Caco-2 (cell line): ENCODE measurements at regions of chr7 and their contacts with region 1.

Region 1: DNA sequence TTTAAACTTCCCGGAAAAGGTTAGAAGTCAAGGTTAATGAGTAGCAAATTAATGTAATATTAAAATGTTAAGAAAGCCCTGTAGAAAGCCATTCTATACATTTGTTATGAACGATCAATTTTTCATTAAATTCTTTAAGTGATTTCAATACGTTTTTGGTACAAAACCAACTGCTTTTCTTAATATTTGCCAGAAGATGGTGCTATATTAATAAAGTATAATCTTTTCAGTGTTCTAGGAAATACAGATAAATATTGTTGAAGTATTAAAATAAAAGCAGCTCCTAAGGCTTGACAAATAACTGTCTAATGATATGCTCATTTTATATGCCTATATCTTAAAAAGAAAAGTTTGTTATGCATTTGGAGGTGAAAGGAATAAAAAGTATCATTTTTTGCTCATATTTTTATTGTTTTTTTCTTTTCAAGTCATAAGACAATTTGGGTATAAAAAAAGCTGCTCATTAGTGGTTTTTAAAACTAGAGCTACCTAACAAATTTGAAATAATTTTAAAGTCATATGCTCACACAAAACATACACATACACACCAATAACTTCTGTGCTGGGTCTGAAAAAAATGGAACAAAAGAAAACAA is 130.3 kb upstream of the POT1 start:
- DNase-seq: no peak
- H3K4me3 ChIP-seq: no peak overlapping the region
- H3K4me3 Mint-ChIP-seq: no peak overlapping the region
- H3K27ac Mint-ChIP-seq: no peak overlapping the region
- H3K4me1 ChIP-seq: peaks cover 4% of the 10 kb centered on the region; the same call in 1 of the 2 replicates
- H3K4me1 Mint-ChIP-seq: peaks cover 8% of the 10 kb centered on the region
- H3K27me3 ChIP-seq: no peaks in the 10 kb centered on the region
- H3K27me3 Mint-ChIP-seq: peaks cover 2% of the 10 kb centered on the region
- CTCF ChIP-seq: peak; percentile 5 to 41

Region 2: GRCh38 chr7:124497176-124497575 is 562.8 kb before region 1 on chr7:
- CTCF ChIA-PET with region 1: no interaction called
- POLR2A ChIA-PET with region 1: no interaction called
- intact Hi-C with region 1: no loop called
- DNase-seq: no peak
- H3K4me3 ChIP-seq: no peak overlapping the region
- H3K4me3 Mint-ChIP-seq: no peak overlapping the region
- H3K27ac Mint-ChIP-seq: no peak overlapping the region
- H3K4me1 ChIP-seq: no peaks in the 10 kb centered on the region
- H3K4me1 Mint-ChIP-seq: no peaks in the 10 kb centered on the region
- H3K27me3 ChIP-seq: no peaks in the 10 kb centered on the region
- H3K27me3 Mint-ChIP-seq: peaks cover 3% of the 10 kb centered on the region
- CTCF ChIP-seq: no peak

Region 3: DNA sequence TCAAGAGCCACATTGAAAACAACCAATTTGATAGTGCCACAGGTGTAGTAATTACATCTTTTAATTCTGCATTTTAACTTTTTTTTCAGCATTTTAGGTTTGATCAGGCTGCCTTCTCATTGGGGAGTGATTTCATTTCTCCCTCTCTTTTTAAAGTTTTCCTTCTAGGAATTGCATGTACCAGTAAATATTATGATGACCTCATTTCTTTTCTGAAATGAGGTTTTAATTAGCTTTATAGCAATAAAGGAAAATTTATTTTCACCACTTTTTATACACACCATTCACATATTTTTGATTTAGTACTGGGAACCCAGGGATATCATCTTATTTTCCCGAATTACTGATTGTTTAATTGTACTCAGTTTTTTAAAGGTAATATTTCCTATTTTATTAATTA is 52.6 kb before region 1 on chr7:
- CTCF ChIA-PET with region 1: no interaction called
- POLR2A ChIA-PET with region 1: no interaction called
- intact Hi-C with region 1: no loop called
- DNase-seq: no peak
- H3K4me3 ChIP-seq: no peak overlapping the region
- H3K4me3 Mint-ChIP-seq: no peak overlapping the region
- H3K27ac Mint-ChIP-seq: no peak overlapping the region
- H3K4me1 ChIP-seq: no peaks in the 10 kb centered on the region
- H3K4me1 Mint-ChIP-seq: no peaks in the 10 kb centered on the region
- H3K27me3 ChIP-seq: no peaks in the 10 kb centered on the region
- H3K27me3 Mint-ChIP-seq: no peaks in the 10 kb centered on the region
- CTCF ChIP-seq: no peak

Region 4: DNA sequence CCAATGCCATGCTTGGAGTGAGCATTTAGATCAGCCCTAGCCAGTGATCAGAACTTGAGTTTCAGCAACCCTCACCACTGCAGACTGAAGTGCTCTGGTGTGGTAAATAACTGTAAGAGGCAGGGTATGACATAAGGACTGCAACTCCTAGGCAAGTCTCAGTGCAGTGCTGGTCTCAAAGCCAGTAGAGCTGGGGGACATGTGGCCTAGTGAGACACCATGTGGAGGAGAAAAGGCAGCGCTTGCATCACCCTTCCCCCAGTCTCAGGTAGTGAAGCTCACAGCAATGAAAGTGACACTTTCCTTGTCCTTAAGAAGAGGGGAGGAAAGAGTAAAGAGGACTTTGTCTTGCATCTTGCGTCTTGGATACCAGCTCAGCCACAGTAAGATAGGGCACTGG is 256.5 kb after region 1 on chr7:
- CTCF ChIA-PET with region 1: interaction called, 6 read pairs
- POLR2A ChIA-PET with region 1: no interaction called
- intact Hi-C with region 1: loop called (anchors 1 kb)
- DNase-seq: peak; percentile 67 to 75
- H3K4me3 ChIP-seq: no peak overlapping the region
- H3K4me3 Mint-ChIP-seq: no peak overlapping the region
- H3K27ac Mint-ChIP-seq: no peak overlapping the region
- H3K4me1 ChIP-seq: no peaks in the 10 kb centered on the region
- H3K4me1 Mint-ChIP-seq: no peaks in the 10 kb centered on the region
- H3K27me3 ChIP-seq: no peaks in the 10 kb centered on the region
- H3K27me3 Mint-ChIP-seq: peaks cover 5% of the 10 kb centered on the region
- CTCF ChIP-seq: peak; percentile 34 to 60

Region 5: GRCh38 chr7:125670926-125671572 is 611.1 kb after region 1 on chr7:
- CTCF ChIA-PET with region 1: no interaction called
- POLR2A ChIA-PET with region 1: no interaction called
- intact Hi-C with region 1: loop called (anchors 1 kb)
- DNase-seq: peak in 1 of 2 experiments; percentile 9
- H3K4me3 ChIP-seq: no peak overlapping the region
- H3K4me3 Mint-ChIP-seq: no peak overlapping the region
- H3K27ac Mint-ChIP-seq: no peak overlapping the region
- H3K4me1 ChIP-seq: no peaks in the 10 kb centered on the region
- H3K4me1 Mint-ChIP-seq: no peaks in the 10 kb centered on the region
- H3K27me3 ChIP-seq: no peaks in the 10 kb centered on the region
- H3K27me3 Mint-ChIP-seq: no peaks in the 10 kb centered on the region
- CTCF ChIP-seq: peak; percentile 58 to 61